Lower leg skin (tissue), 4 donors: ENCODE measurements at regions of chr7 and their contacts with region 1.

Region 1: DNA sequence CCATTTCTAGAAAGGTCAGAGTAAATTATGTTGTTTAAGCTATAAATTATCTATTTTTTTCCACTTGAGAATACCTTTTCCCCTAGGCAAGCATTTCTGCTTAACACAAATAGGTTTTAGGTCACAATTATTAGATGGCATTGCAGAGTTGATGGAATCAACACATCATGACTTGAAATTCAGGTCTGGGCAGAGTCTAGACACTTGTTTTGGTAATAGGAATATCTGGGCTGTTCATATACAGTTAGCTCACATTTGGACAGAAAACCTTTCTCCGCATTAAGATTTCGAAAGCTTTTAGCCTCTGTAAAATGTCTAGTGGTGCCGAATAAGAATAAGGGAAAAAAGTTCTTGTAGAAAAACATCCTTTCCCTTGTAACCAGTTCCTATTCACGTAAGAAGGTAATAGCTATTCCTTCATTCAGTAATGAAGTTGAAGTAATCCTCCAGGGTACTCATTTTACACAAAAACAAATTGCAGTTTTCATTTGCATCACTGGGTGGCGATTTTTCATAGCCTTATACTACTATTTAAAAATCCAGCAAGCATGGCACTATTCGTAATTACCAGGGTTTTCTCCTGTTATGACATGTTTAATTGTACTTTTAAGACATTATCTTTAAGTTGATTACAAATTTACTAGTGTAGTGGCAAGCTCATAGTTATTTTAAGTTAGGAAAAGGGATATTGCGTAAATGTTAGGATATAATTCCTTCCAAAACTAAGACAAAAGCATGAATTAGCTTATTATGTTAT is 37.0 kb downstream of the RPA3 start:
- DNase-seq: peak in 1 of 2 donors; percentile 77
- H3K4me3 ChIP-seq: no peak overlapping the region
- CTCF ChIP-seq: peak in 1 of 3 donors; percentile 27
- POLR2A ChIP-seq: no peak

Region 2: GRCh38 chr7:7751243-7752092 is 70.1 kb after region 1 on chr7:
- intact Hi-C with region 1: loop called (anchors 10 kb)
- DNase-seq: no peak
- H3K4me3 ChIP-seq: no peak overlapping the region
- CTCF ChIP-seq: no peak
- POLR2A ChIP-seq: no peak

Region 3: GRCh38 chr7:7795203-7796135 is 114.1 kb after region 1 on chr7:
- intact Hi-C with region 1: no loop called
- DNase-seq: no peak
- H3K4me3 ChIP-seq: no peak overlapping the region
- CTCF ChIP-seq: no peak
- POLR2A ChIP-seq: no peak

Region 4: DNA sequence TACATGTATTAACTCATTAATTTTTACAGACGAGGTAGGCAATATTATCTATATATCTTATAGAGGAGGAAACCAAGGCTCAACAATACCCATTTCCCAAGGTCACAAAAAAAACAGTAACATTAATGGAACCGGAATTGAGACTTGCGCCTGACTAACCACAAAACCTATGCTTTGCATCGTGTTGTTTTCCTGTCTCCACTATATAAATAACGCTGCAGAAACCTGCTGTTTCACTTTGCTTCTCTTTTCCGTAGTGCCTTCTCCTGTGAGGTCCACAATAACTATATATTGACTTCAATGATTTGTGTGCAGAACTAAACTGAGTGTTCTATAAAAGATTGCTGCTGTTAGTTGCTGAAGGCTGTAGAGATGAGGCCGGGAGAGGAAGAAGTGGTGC is 134.7 kb after region 1 on chr7:
- intact Hi-C with region 1: no loop called
- DNase-seq: no peak
- H3K4me3 ChIP-seq: no peak overlapping the region
- CTCF ChIP-seq: no peak
- POLR2A ChIP-seq: no peak